ENCODE measurements at regions of chr4 and their contacts with region 1.

Region 1: GRCh38 chr4:80365928-80366327 is 30.4 kb downstream of the CFAP299 start:
- DNase-seq: no peak
- H3K4me3 ChIP-seq: no peak overlapping the region
- H3K27ac ChIP-seq: no peak overlapping the region
- H3K4me1 ChIP-seq: no peaks in the 10 kb centered on the region
- H3K27me3 ChIP-seq: peaks cover 0 to 4% (median under 1%) of the 10 kb centered on the region in 4 donors
- CTCF ChIP-seq: peak in 5 of 6 experiments; percentile 23 to 71 (median 48)
- POLR2A ChIP-seq: no peak

Region 2: DNA sequence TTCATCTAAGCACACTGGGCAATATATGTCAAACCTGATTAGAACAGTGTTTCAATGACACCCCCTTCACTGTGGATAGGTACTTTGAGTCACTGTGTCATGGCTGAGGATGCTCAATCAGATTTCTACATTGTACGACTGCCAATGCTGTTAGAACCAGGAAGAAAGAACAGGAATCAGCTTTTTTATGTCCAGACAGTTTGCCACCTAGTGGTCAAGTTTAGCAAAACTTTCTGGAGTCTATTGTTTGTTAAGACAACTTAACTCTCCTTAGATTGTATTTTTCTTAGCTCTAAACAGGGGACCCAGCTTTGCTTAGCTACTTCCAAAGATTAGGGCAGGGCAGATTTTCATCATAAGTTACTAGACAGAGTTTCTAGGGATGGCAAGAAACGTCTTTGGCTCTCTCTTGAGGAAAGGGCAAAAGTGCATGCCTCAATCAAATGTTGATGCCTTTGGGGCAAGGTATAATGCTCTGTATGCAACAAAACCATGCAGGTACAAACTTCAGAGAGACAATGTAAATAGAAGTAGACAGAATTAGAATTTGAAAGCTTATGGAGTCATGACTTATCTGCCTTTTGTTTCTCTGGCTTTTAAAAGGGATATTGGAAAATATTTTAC is 624.1 kb after region 1 on chr4:
- intact Hi-C with region 1: loop called (anchors 5 kb)
- DNase-seq: no peak
- H3K4me3 ChIP-seq: no peak overlapping the region
- H3K27ac ChIP-seq: no peak overlapping the region
- H3K4me1 ChIP-seq: no peaks in the 10 kb centered on the region
- H3K27me3 ChIP-seq: peaks cover 0 to 9% (median 0%) of the 10 kb centered on the region in 4 donors
- CTCF ChIP-seq: peak; percentile 49 to 72 (median 62)
- POLR2A ChIP-seq: no peak

Region 3: DNA sequence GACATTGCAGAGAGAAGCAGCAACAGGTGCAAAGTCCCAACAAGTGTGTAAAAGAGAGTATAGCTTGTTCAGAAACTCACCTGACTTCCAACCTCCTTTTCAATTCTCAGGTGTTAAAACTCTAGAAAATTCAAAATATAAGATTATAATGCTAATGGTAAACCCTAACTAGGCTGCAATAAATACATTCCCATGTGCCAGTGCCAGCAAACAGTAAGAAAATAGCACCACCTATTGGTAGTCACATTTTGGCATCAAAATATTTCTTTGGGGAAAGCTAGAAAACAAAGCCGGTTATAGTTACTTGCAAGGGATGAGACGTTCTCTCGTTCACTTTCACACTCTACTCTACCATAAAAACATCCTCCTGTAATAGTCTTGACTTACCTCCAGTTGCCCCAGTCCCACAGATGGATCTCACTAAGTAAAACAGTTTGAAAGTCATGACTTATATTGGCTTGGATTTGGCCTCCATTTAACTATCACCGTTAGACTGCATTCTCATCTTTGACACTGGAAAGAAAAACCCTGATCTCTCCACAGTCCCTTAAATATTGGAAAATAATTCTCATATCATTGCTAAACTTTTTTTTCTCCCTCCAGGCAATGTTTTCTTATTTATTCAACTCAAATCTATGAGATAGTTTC is 674.2 kb after region 1 on chr4:
- intact Hi-C with region 1: loop called (anchors 10 kb)
- DNase-seq: no peak
- H3K4me3 ChIP-seq: no peak overlapping the region
- H3K27ac ChIP-seq: no peak overlapping the region
- H3K4me1 ChIP-seq: peaks cover 0 to 6% (median 0%) of the 10 kb centered on the region in 3 donors
- H3K27me3 ChIP-seq: peaks cover 0 to 15% (median 0%) of the 10 kb centered on the region in 4 donors
- CTCF ChIP-seq: peak; percentile 39 to 72 (median 45)
- POLR2A ChIP-seq: no peak

Measured in esophagus squamous epithelium (tissue), 5 donors.